Activated T-helper 1 cell treated with anti-CD3 and anti-CD28 coated beads, Interleukin-12 subunit alpha, Interleukin-12 subunit beta, Interleukin-2, Interleukin-4 antibody, amounts not matched to agents 30 ng/mL and 10 ng/mL and 1 ng/mL, durations not matched to agents 14 hours and 24 hours and 36 hours (primary cell): ENCODE measurements at regions of chr5 and their contacts with region 1.

Region 1: DNA sequence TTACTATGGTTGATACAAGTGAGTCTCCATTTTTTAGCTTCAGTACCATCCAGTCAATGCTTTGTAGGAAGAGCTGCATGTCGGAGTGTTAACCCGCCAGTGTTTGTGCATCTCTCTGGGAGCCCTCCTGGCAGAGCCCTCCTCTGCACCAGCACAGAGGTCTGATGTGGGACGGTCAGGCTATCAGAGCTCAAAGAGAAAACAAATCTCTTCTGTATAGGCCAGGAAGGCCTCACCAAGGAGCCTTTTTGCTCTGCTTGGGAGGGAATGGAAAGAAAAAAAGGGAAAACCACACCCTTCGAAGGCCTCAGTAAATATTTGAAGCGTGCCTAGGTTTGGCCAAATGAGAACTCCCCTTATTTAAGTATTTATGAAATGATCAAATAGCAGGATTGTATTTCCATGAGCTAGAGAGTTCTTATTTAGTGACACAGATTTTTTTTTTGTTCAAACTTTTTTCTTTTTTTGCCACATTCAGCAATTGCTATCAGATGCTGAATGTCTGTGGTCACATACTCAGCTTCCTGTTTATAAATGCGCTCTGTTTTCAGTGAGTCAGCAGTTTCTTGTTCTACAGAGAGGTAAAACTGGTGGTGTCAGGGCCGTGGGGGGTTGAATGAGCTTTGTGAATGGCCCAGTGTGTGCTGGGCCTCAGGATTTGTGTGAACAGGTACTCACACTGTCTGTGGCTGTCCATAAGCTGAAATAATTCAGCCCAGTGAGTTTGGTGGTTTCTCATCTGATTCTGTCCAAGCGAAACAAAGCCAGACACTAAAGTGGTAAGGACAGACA is 226.6 kb downstream of the SNX18 start:
- DNase-seq: peak; percentile 63
- H3K4me3 Mint-ChIP-seq: peak overlapping the region; percentile 50
- H3K27ac Mint-ChIP-seq: peak overlapping the region; percentile 87
- H3K4me1 Mint-ChIP-seq: peaks cover 20% of the 10 kb centered on the region
- H3K27me3 Mint-ChIP-seq: no peaks in the 10 kb centered on the region

Region 2: GRCh38 chr5:54761213-54761701 is 17.1 kb after region 1 on chr5:
- intact Hi-C with region 1: loop called (anchors 2 kb)
- DNase-seq: no peak
- H3K4me3 Mint-ChIP-seq: no peak overlapping the region
- H3K27ac Mint-ChIP-seq: no peak overlapping the region
- H3K4me1 Mint-ChIP-seq: peaks cover 32% of the 10 kb centered on the region
- H3K27me3 Mint-ChIP-seq: peaks cover 2% of the 10 kb centered on the region

Region 3: GRCh38 chr5:54769071-54769470 is 24.9 kb after region 1 on chr5:
- intact Hi-C with region 1: loop called (anchors 2 kb)
- DNase-seq: no peak
- H3K4me3 Mint-ChIP-seq: no peak overlapping the region
- H3K27ac Mint-ChIP-seq: no peak overlapping the region
- H3K4me1 Mint-ChIP-seq: peaks cover 10% of the 10 kb centered on the region
- H3K27me3 Mint-ChIP-seq: peaks cover 10% of the 10 kb centered on the region

Region 4: GRCh38 chr5:54792611-54793404 is 48.6 kb after region 1 on chr5:
- intact Hi-C with region 1: loop called (anchors 1 kb)
- DNase-seq: no peak
- H3K4me3 Mint-ChIP-seq: peak overlapping the region; percentile 32
- H3K27ac Mint-ChIP-seq: peak overlapping the region; percentile 91
- H3K4me1 Mint-ChIP-seq: peaks cover 47% of the 10 kb centered on the region
- H3K27me3 Mint-ChIP-seq: peaks cover 3% of the 10 kb centered on the region